Astrocyte of the cerebellum (primary cell): ENCODE measurements at regions of chr18 and their contacts with region 1.

Region 1: DNA sequence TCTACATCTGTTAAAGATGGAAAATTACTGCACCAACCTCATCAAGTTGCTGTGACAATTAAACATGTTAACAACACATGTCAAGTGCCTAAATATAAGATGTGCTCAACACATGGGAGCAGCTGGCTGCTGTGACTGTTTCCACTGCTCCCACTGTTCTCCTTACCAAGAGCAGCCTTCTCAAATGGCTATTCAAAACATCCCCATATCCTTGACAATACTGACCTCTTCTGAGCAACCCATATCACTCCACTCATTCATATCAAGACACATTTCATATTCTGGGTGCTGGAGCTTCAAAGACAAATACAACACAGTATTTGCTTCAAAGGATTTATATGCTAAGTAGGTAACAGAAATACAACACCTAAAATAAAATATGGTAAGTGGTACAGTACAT is 60.3 kb downstream of the PIAS2 start:
- DNase-seq: no peak
- H3K4me3 ChIP-seq: no peak overlapping the region
- CTCF ChIP-seq: peak; percentile 11

Region 2: GRCh38 chr18:46917108-46917802 is 60.3 kb after region 1 on chr18 and contains the starts of genes KATNAL2 and PIAS2:
- in situ Hi-C with region 1: loop called (anchors 5 kb)
- DNase-seq: no peak
- H3K4me3 ChIP-seq: peak within 1 kb of the TSS; percentile 71
- CTCF ChIP-seq: no peak